ENCODE measurements at regions of chr12 and their contacts with region 1.

Region 1: GRCh38 chr12:4178424-4179170 is 95.0 kb upstream of the CCND2 start:
- DNase-seq: no peak
- ATAC-seq: no peak
- H3K4me3 ChIP-seq: no peak overlapping the region
- H3K4me3 Mint-ChIP-seq: peak overlapping the region in 1 of 10 donors; percentile 43
- H3K27ac ChIP-seq: no peak overlapping the region
- H3K27ac Mint-ChIP-seq: peak overlapping the region in 1 of 9 donors; percentile 64
- H3K4me1 ChIP-seq: no peaks in the 10 kb centered on the region
- H3K4me1 Mint-ChIP-seq: peaks cover 0 to 22% (median 0%) of the 10 kb centered on the region in 7 donors
- H3K27me3 ChIP-seq: no peaks in the 10 kb centered on the region
- H3K27me3 Mint-ChIP-seq: peaks cover 0 to 5% (median 0%) of the 10 kb centered on the region in 5 donors

Region 2: GRCh38 chr12:4164559-4165558 is 13.7 kb before region 1 on chr12:
- CTCF ChIA-PET with region 1: interaction called, 3 read pairs
- POLR2A ChIA-PET with region 1: no interaction called
- intact Hi-C with region 1: loop called in 1 of 2 experiments (anchors 2 kb)
- DNase-seq: peak; percentile 43 to 65 (median 58)
- ATAC-seq: peak; percentile 93
- H3K4me3 ChIP-seq: peak overlapping the region; percentile 64
- H3K4me3 Mint-ChIP-seq: peak overlapping the region; percentile 82 to 94 (median 88)
- H3K27ac ChIP-seq: peak overlapping the region; percentile 71
- H3K27ac Mint-ChIP-seq: peak overlapping the region; percentile 82 to 98 (median 88)
- H3K4me1 ChIP-seq: peaks cover 4 to 6% of the 10 kb centered on the region in 2 donors
- H3K4me1 Mint-ChIP-seq: peaks cover 13 to 61% (median 20%) of the 10 kb centered on the region in 7 donors
- H3K27me3 ChIP-seq: no peaks in the 10 kb centered on the region
- H3K27me3 Mint-ChIP-seq: no peaks in the 10 kb centered on the region

Region 3: DNA sequence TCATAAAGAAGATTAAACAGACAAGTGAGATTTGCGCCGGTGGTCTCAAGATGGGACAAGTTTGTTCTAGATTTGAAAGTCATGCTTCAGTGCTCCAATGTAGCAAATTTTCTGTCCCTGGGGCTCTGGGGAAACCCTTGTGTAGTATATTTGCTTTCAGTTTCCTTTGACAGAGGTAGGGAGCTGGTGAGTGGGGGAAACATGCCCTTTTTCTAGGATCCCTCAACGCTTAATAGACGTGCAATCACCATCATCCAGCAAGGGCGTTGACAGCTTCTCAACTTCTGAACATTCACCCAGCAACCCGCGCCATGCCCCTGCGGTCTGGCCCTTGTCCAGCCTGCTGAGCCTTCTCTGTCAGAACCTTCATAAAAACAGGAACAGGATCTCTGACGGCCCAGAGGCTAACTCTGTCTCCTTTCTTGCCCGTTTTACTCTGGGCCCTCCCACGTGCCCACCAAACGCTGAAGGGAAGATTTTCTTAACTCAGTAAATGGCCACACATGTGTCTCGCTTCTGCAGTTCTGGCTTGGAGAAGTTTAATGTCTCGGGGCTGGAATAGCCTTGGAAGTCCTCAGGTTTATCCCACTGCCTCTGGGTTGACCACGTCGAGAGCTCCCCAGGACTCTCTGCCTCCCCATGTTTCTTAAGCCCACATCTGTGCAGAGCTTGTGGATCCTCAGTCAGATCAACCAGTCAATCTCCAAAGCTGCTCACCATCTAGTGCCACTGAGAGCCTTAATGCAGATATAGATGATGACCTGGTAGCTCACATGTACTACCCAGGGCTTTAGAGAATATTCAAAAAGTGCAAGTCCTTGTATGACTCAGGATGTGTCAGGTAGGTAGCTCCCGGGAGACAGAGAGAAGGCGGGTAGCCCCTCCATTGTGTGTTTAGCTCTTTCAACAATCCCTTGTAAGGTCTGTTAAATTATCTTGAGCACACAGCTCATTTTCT is 36.9 kb after region 1 on chr12:
- CTCF ChIA-PET with region 1: no interaction called
- POLR2A ChIA-PET with region 1: no interaction called
- intact Hi-C with region 1: loop called in 1 of 2 experiments (anchors 5 kb)
- DNase-seq: peak; percentile 7 to 35 (median 19)
- ATAC-seq: peak; percentile 89
- H3K4me3 ChIP-seq: peak overlapping the region; percentile 36
- H3K4me3 Mint-ChIP-seq: peak overlapping the region; percentile 36 to 78 (median 68)
- H3K27ac ChIP-seq: peak overlapping the region; percentile 14
- H3K27ac Mint-ChIP-seq: peak overlapping the region; percentile 41 to 86 (median 78)
- H3K4me1 ChIP-seq: peaks cover 9 to 10% of the 10 kb centered on the region in 2 donors
- H3K4me1 Mint-ChIP-seq: peaks cover 11 to 48% (median 23%) of the 10 kb centered on the region in 7 donors
- H3K27me3 ChIP-seq: no peaks in the 10 kb centered on the region
- H3K27me3 Mint-ChIP-seq: peaks cover 0 to 2% (median 0%) of the 10 kb centered on the region in 5 donors